ENCODE measurements at regions of chr3 and their contacts with region 1.

Region 1: DNA sequence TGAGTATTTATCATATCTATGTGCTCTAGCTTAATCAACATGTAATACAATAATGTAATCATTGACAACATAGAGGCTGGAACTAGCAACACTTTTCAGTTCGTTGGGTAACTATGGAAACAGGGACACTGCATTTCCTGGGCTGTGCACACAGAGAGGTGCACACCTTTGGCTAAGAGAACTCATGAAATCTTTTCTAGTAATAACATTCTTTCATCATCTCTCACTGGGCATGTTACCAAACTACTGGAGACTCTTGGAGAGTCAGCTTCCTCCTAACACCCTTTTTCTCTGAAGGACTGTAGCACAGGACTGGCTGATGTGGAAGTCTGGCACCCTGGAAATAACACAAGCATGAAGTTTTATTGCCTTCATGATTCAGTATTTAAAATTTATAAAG is 135.6 kb downstream of the KCNMB2 start:
- DNase-seq: no peak
- ATAC-seq: peak in 5 of 8 donors; percentile 20 to 71 (median 39)
- H3K4me3 ChIP-seq: no peak overlapping the region
- H3K27ac ChIP-seq: peak overlapping the region in 6 of 10 donors; percentile 48 to 69 (median 58)
- H3K4me1 ChIP-seq: peaks cover 3 to 50% (median 24%) of the 10 kb centered on the region in 9 donors
- H3K27me3 ChIP-seq: no peaks in the 10 kb centered on the region
- CTCF ChIP-seq: no peak

Region 2: DNA sequence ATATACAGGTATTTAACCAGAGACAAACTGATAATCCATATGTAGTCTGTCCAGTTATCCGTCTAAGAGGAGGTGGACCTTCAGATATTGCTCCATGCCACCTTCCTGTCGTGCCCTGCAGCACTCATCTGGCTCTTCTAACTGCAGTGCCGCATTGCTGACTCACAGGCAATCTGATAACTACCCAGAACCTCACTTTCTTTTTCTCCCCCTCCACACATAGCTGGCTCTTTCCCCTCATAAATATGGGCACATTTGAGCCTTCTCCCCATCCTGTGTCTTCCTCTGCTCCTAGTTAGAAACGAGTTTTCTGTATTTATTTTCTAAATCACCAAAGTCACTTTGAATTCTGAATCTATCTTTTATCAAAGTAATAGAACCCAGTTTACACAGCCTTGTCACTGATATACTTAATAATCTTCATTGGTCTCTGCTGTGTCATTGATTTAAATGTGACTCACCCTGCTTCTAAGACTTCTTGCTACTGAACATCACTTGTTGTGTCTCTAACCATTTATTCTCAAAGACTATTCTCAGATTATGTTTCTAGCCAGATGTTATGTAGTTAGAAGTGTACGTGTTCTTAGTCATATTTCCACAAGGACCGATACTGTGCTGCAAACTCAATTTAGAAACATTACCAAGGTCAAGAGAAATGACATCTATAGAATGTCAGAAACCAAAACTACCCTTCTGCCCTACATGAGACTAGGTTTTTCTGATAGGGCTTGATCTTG is 153.0 kb before region 1 on chr3:
- intact Hi-C with region 1: loop called in 1 of 10 experiments (anchors 10 kb)
- DNase-seq: no peak
- ATAC-seq: peak in 1 of 8 donors; percentile 73
- H3K4me3 ChIP-seq: no peak overlapping the region
- H3K27ac ChIP-seq: peak overlapping the region in 1 of 10 donors; percentile 4
- H3K4me1 ChIP-seq: peaks cover 0 to 21% (median 3%) of the 10 kb centered on the region in 9 donors
- H3K27me3 ChIP-seq: no peaks in the 10 kb centered on the region
- CTCF ChIP-seq: no peak

Measured in heart right ventricle (tissue), 16 donors.